ACHN (cell line): ENCODE measurements at regions of chr12 and their contacts with region 1.

Region 1: DNA sequence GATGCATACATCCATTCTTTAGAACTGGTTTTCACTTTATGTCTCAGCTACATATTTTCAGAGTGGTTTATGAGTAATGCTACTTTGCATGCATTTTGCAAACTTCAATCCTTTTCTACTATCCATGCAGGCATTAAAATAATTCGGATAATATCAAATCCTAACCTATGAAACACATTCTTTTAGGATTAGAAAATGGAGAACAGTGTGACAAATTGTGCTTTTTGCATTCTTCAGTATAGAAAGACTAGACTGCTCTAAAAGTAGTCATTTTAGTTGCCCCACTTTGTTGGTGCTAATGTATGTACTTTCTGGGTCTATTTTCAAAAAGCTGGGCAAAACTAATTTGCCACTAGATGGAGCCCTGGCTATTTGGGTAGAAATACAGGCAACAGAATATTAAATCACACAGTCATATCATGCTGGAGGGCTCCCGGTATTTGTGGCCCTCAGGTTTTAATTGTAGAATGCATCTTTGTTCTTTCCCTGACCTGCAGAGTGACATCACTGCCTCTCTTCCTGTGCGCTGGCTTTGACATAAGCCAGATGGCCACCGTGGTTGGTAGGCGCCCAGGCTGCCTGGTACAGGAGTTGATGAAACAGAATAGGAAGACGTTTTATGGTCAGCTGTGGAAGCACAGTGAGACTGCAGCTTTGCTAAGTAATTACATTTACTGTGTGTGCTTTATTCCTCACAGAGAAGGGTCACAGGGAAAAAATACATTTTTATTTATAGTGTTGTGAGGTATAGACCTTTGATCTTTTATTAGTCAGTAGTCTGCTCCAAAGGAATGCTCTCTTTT is 28.1 kb downstream of the MSRB3 start:
- DNase-seq: peak; percentile 74

Region 2: DNA sequence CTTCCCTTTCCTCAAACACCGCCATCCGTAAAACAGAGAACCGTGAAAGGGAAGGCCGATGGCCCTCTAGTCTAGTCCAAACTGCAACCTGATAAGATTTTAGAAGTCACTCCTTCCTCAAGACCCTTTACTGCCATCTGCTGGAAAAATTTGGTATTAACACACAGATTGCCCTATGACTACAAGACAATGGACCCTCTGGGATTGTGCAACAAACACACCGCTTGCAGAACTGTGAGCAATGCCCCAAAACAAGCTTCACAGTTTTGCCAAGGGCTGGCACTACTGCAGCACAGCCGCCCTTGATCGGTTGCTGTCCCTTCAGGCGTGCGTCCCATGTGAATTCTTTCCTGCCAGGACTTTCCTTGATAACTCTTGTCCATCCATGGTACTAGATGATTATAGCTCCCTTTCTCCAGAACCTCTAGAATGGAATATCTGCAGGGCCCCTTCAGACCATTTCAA is 800.9 kb after region 1 on chr12:
- in situ Hi-C with region 1: loop called (anchors 25 kb)
- DNase-seq: peak; percentile 98